Calu3 (cell line): ENCODE measurements at regions of chr17 and their contacts with region 1.

Region 1: GRCh38 chr17:70552230-70552981 is 383.1 kb downstream of the KCNJ2 start:
- DNase-seq: no peak
- H3K4me3 Mint-ChIP-seq: no peak overlapping the region
- H3K27ac Mint-ChIP-seq: no peak overlapping the region
- H3K4me1 Mint-ChIP-seq: no peaks in the 10 kb centered on the region
- H3K27me3 Mint-ChIP-seq: no peaks in the 10 kb centered on the region
- CTCF ChIP-seq: peak; percentile 59

Region 2: GRCh38 chr17:69567130-69567529 is 985.3 kb before region 1 on chr17:
- CTCF ChIA-PET with region 1: no interaction called
- intact Hi-C with region 1: loop called (anchors 5 kb)
- DNase-seq: no peak
- H3K4me3 Mint-ChIP-seq: no peak overlapping the region
- H3K27ac Mint-ChIP-seq: no peak overlapping the region
- H3K4me1 Mint-ChIP-seq: no peaks in the 10 kb centered on the region
- H3K27me3 Mint-ChIP-seq: peaks cover 18% of the 10 kb centered on the region
- CTCF ChIP-seq: no peak

Region 3: DNA sequence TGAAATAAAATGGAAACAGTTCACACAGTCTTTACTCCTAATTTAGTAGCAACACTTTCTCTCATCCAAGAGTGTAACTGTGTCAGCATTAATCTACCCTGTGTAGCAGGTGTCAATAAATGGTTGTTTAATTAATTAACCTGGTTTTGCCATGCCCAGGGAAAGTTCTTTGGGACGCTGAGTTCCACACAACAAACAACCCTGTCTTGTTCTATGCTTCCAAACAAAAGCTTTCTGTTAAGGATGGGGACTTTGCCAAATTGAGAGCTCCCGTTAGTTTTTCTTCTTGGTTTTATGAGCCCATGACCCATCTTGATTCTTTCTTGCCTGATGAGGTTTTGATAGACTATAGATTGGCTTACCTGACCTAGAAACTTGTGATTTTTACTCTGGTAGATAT is 147.0 kb after region 1 on chr17:
- CTCF ChIA-PET with region 1: no interaction called
- intact Hi-C with region 1: no loop called
- DNase-seq: no peak
- H3K4me3 Mint-ChIP-seq: no peak overlapping the region
- H3K27ac Mint-ChIP-seq: no peak overlapping the region
- H3K4me1 Mint-ChIP-seq: peaks cover 8% of the 10 kb centered on the region
- H3K27me3 Mint-ChIP-seq: no peaks in the 10 kb centered on the region
- CTCF ChIP-seq: no peak